CD8-positive, alpha-beta T cell (primary cell): ENCODE measurements at regions of chr5 and their contacts with region 1.

Region 1: DNA sequence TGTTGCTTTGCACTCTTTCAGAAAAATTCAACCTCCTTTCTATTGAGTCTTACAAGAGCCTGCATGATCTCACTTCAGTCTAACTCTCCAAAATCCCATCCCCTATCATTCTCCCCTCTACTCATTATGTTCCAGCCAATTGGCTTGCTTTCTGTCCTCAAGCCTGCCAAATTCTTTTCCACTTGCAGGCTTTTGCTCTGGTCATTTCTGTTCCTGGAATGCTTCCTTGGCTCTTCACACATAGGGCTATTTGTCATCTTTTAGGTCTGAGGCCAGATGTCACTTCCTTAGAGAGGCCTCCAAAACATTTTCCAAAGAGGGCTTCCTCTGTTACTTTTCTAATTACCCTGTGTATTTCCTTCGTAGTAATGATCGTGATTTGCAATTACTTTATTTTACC is 11.8 kb upstream of the CHD1 start:
- DNase-seq: no peak
- ATAC-seq: no peak
- H3K4me3 ChIP-seq: no peak overlapping the region
- H3K4me3 Mint-ChIP-seq: no peak overlapping the region
- H3K27ac ChIP-seq: no peak overlapping the region
- H3K27ac Mint-ChIP-seq: peak overlapping the region; percentile 47
- H3K4me1 ChIP-seq: no peaks in the 10 kb centered on the region
- H3K4me1 Mint-ChIP-seq: peaks cover 48% of the 10 kb centered on the region
- H3K27me3 ChIP-seq: no peaks in the 10 kb centered on the region
- H3K27me3 Mint-ChIP-seq: no peaks in the 10 kb centered on the region
- CTCF ChIP-seq: no peak

Region 2: DNA sequence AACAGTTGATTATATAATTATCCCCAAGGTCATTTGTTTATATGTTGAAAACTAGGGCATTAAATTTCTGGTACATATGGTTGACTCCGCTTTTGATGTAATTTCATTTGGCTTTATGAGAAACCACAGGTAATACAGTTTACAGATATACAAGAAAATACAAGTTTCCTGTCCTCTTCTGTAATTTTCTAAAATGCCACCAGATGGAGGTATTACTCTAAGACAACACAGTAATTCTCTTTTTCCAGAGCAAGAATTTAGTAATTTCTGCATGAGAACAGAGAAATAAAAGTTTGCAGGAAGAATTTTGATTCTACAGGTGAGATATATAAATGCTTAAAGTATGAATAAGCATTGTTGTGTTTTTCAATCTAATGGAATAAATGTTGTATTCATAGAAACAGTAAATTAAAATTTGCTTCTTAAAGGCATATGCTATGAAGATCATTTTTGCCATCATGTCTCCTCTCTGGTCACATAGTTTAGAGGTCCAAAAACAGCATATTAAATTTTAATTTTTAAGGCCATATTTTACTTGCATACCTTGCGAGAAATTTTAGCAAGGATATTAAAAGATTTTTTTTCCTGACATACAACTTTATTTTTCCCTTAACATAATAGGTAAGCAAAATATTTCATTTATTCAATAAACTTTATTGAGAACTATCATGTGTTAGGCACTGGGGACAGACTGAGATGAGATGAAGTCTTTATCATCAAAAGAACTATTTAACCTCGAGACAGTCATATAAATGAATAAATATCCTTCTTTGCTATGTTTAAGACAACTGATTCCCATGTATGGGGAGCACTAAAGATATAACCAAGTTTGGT is 34.5 kb before region 1 on chr5:
- CTCF ChIA-PET with region 1: interaction called, 5 read pairs
- POLR2A ChIA-PET with region 1: no interaction called
- intact Hi-C with region 1: loop called in 1 of 2 experiments (anchors 5 kb)
- DNase-seq: peak in 2 of 9 experiments; percentile 62 to 72
- ATAC-seq: peak; percentile 67
- H3K4me3 ChIP-seq: no peak overlapping the region
- H3K4me3 Mint-ChIP-seq: no peak overlapping the region
- H3K27ac ChIP-seq: peak overlapping the region in 1 of 2 experiments; percentile 34
- H3K27ac Mint-ChIP-seq: no peak overlapping the region
- H3K4me1 ChIP-seq: peaks cover 20% of the 10 kb centered on the region
- H3K4me1 Mint-ChIP-seq: peaks cover 51% of the 10 kb centered on the region
- H3K27me3 ChIP-seq: no peaks in the 10 kb centered on the region
- H3K27me3 Mint-ChIP-seq: no peaks in the 10 kb centered on the region
- CTCF ChIP-seq: peak; percentile 96

Region 3: GRCh38 chr5:99037668-99038067 is 97.1 kb after region 1 on chr5:
- CTCF ChIA-PET with region 1: no interaction called
- POLR2A ChIA-PET with region 1: no interaction called
- intact Hi-C with region 1: loop called in 1 of 2 experiments (anchors 5 kb)
- DNase-seq: peak; percentile 41 to 85 (median 74)
- ATAC-seq: peak; percentile 71
- H3K4me3 ChIP-seq: peak overlapping the region in 1 of 2 experiments; percentile 4
- H3K4me3 Mint-ChIP-seq: peak overlapping the region; percentile 66
- H3K27ac ChIP-seq: peak overlapping the region; percentile 38 to 49
- H3K27ac Mint-ChIP-seq: peak overlapping the region; percentile 89
- H3K4me1 ChIP-seq: peaks cover 41% of the 10 kb centered on the region
- H3K4me1 Mint-ChIP-seq: peaks cover 53% of the 10 kb centered on the region
- H3K27me3 ChIP-seq: no peaks in the 10 kb centered on the region
- H3K27me3 Mint-ChIP-seq: no peaks in the 10 kb centered on the region
- CTCF ChIP-seq: no peak

Region 4: DNA sequence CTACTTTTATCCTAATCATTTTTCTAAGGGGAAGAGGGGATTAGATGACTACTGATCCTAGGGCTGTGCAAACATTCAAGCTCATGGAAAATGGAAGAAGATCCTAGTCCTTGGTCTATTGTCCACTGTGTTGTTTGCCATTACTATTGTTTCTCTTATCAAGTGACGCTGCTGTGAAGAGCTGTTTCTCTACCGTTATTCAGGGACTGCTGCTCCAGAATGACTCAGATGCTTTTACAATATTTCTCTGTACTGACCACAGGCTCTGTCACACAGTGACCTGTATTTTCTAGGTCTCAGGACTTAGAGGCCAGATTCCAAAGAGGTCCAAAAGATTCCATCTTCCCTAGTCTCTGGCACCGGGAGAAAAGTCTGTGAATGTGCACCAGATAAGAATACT is 147.7 kb after region 1 on chr5:
- CTCF ChIA-PET with region 1: no interaction called
- POLR2A ChIA-PET with region 1: no interaction called
- intact Hi-C with region 1: no loop called
- DNase-seq: no peak
- ATAC-seq: no peak
- H3K4me3 ChIP-seq: no peak overlapping the region
- H3K4me3 Mint-ChIP-seq: no peak overlapping the region
- H3K27ac ChIP-seq: no peak overlapping the region
- H3K27ac Mint-ChIP-seq: no peak overlapping the region
- H3K4me1 ChIP-seq: no peaks in the 10 kb centered on the region
- H3K4me1 Mint-ChIP-seq: peaks cover 8% of the 10 kb centered on the region
- H3K27me3 ChIP-seq: peaks cover 0 to 4% of the 10 kb centered on the region in 2 experiments
- H3K27me3 Mint-ChIP-seq: peaks cover 2% of the 10 kb centered on the region
- CTCF ChIP-seq: no peak